Heart right ventricle (tissue), 16 donors: ENCODE measurements at regions of chrX and their contacts with region 1.

Region 1: GRCh38 chrX:10326578-10326977 is 169.8 kb downstream of the CLCN4 start:
- DNase-seq: peak in 1 of 2 donors; percentile 3
- ATAC-seq: peak in 1 of 8 donors; percentile 85
- H3K4me3 ChIP-seq: no peak overlapping the region
- H3K27ac ChIP-seq: no peak overlapping the region
- H3K4me1 ChIP-seq: no peaks in the 10 kb centered on the region
- H3K27me3 ChIP-seq: peaks cover 0 to 4% (median 0%) of the 10 kb centered on the region in 7 donors
- CTCF ChIP-seq: peak in 7 of 9 donors; percentile 23 to 45 (median 30)

Region 2: DNA sequence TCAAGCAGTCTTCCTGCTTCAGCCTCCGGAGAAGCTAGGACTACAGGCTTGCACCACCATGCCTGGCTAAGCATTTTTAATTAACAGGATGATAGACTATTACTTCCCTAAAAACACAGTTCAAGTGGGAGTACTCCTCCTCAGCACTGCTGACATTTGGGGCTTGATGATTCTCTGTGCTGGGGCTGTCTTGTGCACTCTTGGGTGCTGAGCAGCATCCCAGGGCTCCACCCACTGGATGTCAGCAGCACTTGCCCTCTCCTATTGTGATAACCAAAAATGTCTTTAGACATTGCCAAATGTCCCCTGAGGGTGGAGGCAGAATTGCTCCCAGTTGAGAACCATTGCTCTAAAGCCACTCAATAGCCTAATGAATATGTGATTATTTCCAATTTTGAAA is 109.4 kb before region 1 on chrX:
- intact Hi-C with region 1: loop called in 1 of 10 experiments (anchors 10 kb)
- DNase-seq: peak in 1 of 2 donors; percentile 23
- ATAC-seq: peak in 5 of 8 donors; percentile 67 to 80 (median 70)
- H3K4me3 ChIP-seq: no peak overlapping the region
- H3K27ac ChIP-seq: no peak overlapping the region
- H3K4me1 ChIP-seq: peaks cover 0 to 7% (median 0%) of the 10 kb centered on the region in 9 donors
- H3K27me3 ChIP-seq: peaks cover 0 to 7% (median 0%) of the 10 kb centered on the region in 7 donors
- CTCF ChIP-seq: peak in 4 of 9 donors; percentile 14 to 30 (median 16)

Region 3: GRCh38 chrX:10450229-10450958 is 123.8 kb after region 1 on chrX:
- intact Hi-C with region 1: no loop called
- DNase-seq: no peak
- ATAC-seq: no peak
- H3K4me3 ChIP-seq: no peak overlapping the region
- H3K27ac ChIP-seq: no peak overlapping the region
- H3K4me1 ChIP-seq: no peaks in the 10 kb centered on the region
- H3K27me3 ChIP-seq: no peaks in the 10 kb centered on the region
- CTCF ChIP-seq: no peak

Region 4: GRCh38 chrX:10636337-10636736 is 309.8 kb after region 1 on chrX:
- intact Hi-C with region 1: loop called in 2 of 10 experiments (anchors 2 to 10 kb)
- DNase-seq: peak in 1 of 2 donors; percentile 34
- ATAC-seq: peak in 7 of 8 donors; percentile 44 to 79 (median 55)
- H3K4me3 ChIP-seq: peak overlapping the region in 3 of 10 donors; percentile 17 to 31 (median 20)
- H3K27ac ChIP-seq: no peak overlapping the region
- H3K4me1 ChIP-seq: peaks cover 0 to 19% (median 0%) of the 10 kb centered on the region in 9 donors
- H3K27me3 ChIP-seq: no peaks in the 10 kb centered on the region
- CTCF ChIP-seq: peak in 8 of 9 donors; percentile 11 to 71 (median 54)

Region 5: DNA sequence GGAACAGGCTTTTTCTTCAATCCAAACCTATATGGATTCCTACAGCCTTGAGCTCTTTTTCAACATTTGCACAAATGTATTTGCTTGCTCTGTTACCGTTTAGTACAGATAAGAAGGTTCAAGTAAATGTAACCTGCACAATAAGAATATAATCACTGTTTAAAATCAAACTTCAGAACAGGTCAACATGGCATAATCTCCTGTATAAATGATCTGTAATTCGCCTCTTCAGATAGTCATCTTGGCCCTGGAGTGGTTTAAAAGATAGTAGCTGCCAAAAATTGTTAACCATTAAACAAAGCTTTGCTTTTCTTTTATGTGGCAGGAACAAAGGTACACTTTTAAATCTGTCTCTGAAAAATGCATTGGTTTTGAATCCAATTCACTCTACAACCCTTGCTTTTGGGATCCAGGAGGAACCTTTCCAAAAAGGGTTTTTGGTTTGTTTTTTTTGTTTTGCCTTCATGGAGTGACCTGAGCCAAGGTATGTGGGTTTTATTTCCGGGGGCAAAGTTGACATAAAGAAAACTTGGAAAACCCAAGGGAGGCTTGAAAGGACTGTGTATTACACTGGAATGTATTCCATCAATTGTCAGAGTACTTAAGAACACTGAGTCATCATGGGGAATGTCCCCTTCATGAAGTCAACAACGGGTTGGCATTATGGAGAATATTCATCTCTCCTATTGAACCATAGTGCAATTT is 574.2 kb after region 1 on chrX:
- intact Hi-C with region 1: no loop called
- DNase-seq: no peak
- ATAC-seq: no peak
- H3K4me3 ChIP-seq: no peak overlapping the region
- H3K27ac ChIP-seq: no peak overlapping the region
- H3K4me1 ChIP-seq: no peaks in the 10 kb centered on the region
- H3K27me3 ChIP-seq: no peaks in the 10 kb centered on the region
- CTCF ChIP-seq: no peak